ENCODE measurements at regions of chr12 and their contacts with region 1.

Region 1: DNA sequence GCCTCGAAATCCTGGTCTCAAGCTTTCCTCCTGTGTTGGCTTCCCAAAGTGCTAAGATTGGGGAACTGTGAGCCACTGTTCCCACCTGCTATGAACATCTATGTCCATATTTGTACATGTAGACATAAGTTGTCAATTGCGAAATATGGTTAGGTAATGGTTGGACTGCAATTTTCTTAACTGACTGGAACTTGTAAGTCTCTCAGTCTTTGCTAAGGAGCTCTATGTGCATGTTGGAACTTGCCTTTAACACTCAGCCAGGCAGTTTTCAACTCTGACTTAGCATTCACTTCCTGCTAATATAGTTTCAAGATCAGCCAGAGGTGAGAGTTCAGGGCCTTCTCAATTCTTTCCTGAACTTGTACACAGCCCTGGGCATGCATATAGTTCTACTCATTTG is 44.5 kb upstream of the EEA1 start:
- DNase-seq: peak; percentile 97
- H3K4me3 ChIP-seq: no peak overlapping the region
- H3K27ac ChIP-seq: peak overlapping the region; percentile 60
- H3K4me1 ChIP-seq: peaks cover 42% of the 10 kb centered on the region
- H3K27me3 ChIP-seq: no peaks in the 10 kb centered on the region
- CTCF ChIP-seq: no peak

Region 2: GRCh38 chr12:92827836-92828431 is 145.7 kb before region 1 on chr12:
- CTCF ChIA-PET with region 1: no interaction called
- dilution Hi-C with region 1: no loop called
- in situ Hi-C with region 1: no loop called
- intact Hi-C with region 1: loop called (anchors 5 kb)
- DNase-seq: peak; percentile 30
- H3K4me3 ChIP-seq: no peak overlapping the region
- H3K27ac ChIP-seq: no peak overlapping the region
- H3K4me1 ChIP-seq: no peaks in the 10 kb centered on the region
- H3K27me3 ChIP-seq: no peaks in the 10 kb centered on the region
- CTCF ChIP-seq: peak; percentile 87 to 92

Region 3: GRCh38 chr12:92899388-92900001 is 74.1 kb before region 1 on chr12:
- CTCF ChIA-PET with region 1: no interaction called
- dilution Hi-C with region 1: no loop called
- in situ Hi-C with region 1: no loop called
- intact Hi-C with region 1: loop called (anchors 1 kb)
- DNase-seq: peak; percentile 95
- H3K4me3 ChIP-seq: peak overlapping the region in 2 of 3 experiments; percentile 12 to 23
- H3K27ac ChIP-seq: peak overlapping the region; percentile 85
- H3K4me1 ChIP-seq: peaks cover 19% of the 10 kb centered on the region
- H3K27me3 ChIP-seq: no peaks in the 10 kb centered on the region
- CTCF ChIP-seq: no peak

Region 4: DNA sequence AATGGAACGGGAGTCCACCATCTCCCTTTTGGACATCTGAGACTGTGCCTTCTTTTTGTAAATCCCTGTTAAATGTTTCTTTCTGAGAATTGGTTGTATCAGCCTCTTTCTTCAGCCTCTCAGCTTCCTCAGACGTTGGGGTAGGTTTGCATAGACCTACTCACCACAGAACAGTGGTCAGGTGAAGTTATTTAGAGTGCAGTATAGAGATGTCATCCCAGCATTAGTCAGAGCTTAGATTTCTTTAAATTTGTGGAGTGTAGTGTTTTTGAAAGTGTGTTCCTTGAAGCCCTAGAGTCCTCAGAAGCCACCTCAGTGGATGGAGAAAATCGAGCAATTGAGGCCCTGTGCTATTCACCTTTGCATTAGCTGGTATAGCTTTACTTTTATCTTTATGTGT is 35.6 kb before region 1 on chr12:
- CTCF ChIA-PET with region 1: no interaction called
- dilution Hi-C with region 1: no loop called
- in situ Hi-C with region 1: no loop called
- intact Hi-C with region 1: loop called (anchors 1 kb)
- DNase-seq: peak; percentile 63
- H3K4me3 ChIP-seq: no peak overlapping the region
- H3K27ac ChIP-seq: peak overlapping the region; percentile 93
- H3K4me1 ChIP-seq: peaks cover 30% of the 10 kb centered on the region
- H3K27me3 ChIP-seq: no peaks in the 10 kb centered on the region
- CTCF ChIP-seq: no peak